Naive thymus-derived CD8-positive, alpha-beta T cell (primary cell): ENCODE measurements at regions of chr17 and their contacts with region 1.

Region 1: GRCh38 chr17:1122533-1123392 is 57.0 kb downstream of the ABR start:
- DNase-seq: peak; percentile 61 to 87 (median 78)
- ATAC-seq: peak; percentile 91 to 99
- H3K4me3 Mint-ChIP-seq: no peak overlapping the region
- H3K27ac Mint-ChIP-seq: peak overlapping the region in 4 of 10 donors; percentile 28 to 70 (median 46)
- H3K4me1 Mint-ChIP-seq: peaks cover 4 to 23% (median 7%) of the 10 kb centered on the region in 4 donors
- H3K27me3 Mint-ChIP-seq: peaks cover 0 to 8% (median 0%) of the 10 kb centered on the region in 5 donors

Region 2: DNA sequence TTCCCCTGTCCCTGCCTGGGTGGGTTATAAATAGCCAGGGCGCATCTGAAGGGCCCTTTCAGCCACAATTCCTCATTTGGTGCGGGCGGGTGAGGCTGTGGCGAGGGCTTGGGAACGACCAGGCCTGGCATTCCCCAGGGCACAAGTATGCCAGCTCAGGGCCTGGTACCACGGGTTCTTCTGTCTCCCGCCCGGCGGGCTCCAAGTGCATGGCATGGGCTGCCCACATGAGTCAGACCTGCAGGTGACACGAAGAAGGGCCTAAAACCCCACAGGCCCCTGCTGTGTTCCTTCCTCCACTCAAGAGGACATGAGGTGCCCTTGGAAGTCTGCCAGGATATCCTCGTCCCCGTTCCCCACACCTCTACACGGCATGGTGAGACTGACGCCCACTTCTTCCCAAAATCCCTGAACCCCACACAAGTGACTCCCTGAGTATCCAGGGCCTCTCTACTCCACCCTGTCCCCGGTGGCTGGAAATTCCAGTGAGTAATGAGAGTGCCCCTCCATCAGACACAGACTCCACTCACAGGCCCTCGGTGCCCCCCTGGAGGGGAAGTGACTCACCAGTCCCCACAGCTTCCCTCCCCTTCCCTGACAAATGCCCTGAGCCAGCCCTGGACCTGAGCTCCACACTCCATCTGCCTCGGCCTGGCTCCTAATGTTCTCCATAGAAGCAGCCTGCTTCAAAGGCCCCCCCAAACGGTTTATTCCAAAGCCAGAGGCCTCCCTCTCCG is 11.7 kb before region 1 on chr17:
- POLR2A ChIA-PET with region 1: interaction called, 12 read pairs
- DNase-seq: peak in 1 of 10 donors; percentile 56
- ATAC-seq: no peak
- H3K4me3 Mint-ChIP-seq: peak overlapping the region; percentile 33 to 82 (median 60)
- H3K27ac Mint-ChIP-seq: peak overlapping the region in 9 of 10 donors; percentile 18 to 88 (median 74)
- H3K4me1 Mint-ChIP-seq: peaks cover 25 to 67% (median 56%) of the 10 kb centered on the region in 4 donors
- H3K27me3 Mint-ChIP-seq: no peaks in the 10 kb centered on the region